Activated CD8-positive, alpha-beta T cell treated with anti-CD3 and anti-CD28 coated beads for 36 hours (primary cell): ENCODE measurements at regions of chr4 and their contacts with region 1.

Region 1: GRCh38 chr4:185165605-185166063 is 22.6 kb downstream of the SLC25A4 start:
- DNase-seq: no peak
- ATAC-seq: peak; percentile 85
- H3K4me3 Mint-ChIP-seq: peak overlapping the region; percentile 30
- H3K27ac Mint-ChIP-seq: peak overlapping the region; percentile 58
- H3K4me1 Mint-ChIP-seq: peaks cover 20% of the 10 kb centered on the region
- H3K27me3 Mint-ChIP-seq: peaks cover 3% of the 10 kb centered on the region
- CTCF ChIP-seq: no peak

Region 2: GRCh38 chr4:185247151-185247550 is 81.5 kb after region 1 on chr4:
- CTCF ChIA-PET with region 1: no interaction called
- POLR2A ChIA-PET with region 1: no interaction called
- intact Hi-C with region 1: loop called (anchors 2 kb)
- DNase-seq: no peak
- ATAC-seq: no peak
- H3K4me3 Mint-ChIP-seq: no peak overlapping the region
- H3K27ac Mint-ChIP-seq: peak overlapping the region; percentile 76
- H3K4me1 Mint-ChIP-seq: peaks cover 41% of the 10 kb centered on the region
- H3K27me3 Mint-ChIP-seq: no peaks in the 10 kb centered on the region
- CTCF ChIP-seq: no peak